Colonic mucosa (tissue), 4 donors: ENCODE measurements at regions of chr1 and their contacts with region 1.

Region 1: DNA sequence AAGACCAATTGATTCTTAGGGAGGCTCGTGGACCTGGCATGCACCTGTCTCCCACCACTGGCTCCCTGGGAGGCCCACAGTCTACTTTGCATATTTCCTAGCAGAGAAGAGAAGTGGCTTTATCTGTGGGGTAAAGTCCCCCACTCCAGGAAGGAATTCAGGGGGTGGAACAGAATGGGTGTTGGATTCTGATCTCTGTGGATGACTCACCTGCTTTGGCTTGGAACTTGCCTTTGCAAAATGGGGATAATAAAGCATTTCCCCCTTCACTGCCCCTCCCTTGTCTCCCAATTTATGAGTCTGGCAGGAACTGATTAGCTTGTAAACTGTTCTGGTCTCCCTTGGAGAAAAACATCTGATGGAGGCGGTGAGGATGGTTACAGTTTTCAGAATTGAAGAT is 21.2 kb upstream of the OTUD3 start:
- DNase-seq: peak; percentile 79
- H3K4me3 ChIP-seq: no peak overlapping the region
- H3K27ac ChIP-seq: peak overlapping the region; percentile 66
- H3K4me1 ChIP-seq: no peaks in the 10 kb centered on the region
- H3K27me3 ChIP-seq: no peaks in the 10 kb centered on the region
- CTCF ChIP-seq: no peak

Region 2: GRCh38 chr1:19815801-19816736 is 45.0 kb before region 1 on chr1:
- intact Hi-C with region 1: loop called (anchors 5 kb)
- DNase-seq: peak; percentile 93
- H3K4me3 ChIP-seq: no peak overlapping the region
- H3K27ac ChIP-seq: peak overlapping the region; percentile 87
- H3K4me1 ChIP-seq: no peaks in the 10 kb centered on the region
- H3K27me3 ChIP-seq: no peaks in the 10 kb centered on the region
- CTCF ChIP-seq: no peak